Activated T-helper 1 cell treated with anti-CD3 and anti-CD28 coated beads, Interleukin-12 subunit alpha, Interleukin-12 subunit beta, Interleukin-2, Interleukin-4 antibody, amounts not matched to agents 30 ng/mL and 10 ng/mL and 1 ng/mL, durations not matched to agents 14 hours and 24 hours and 36 hours (primary cell): ENCODE measurements at regions of chr3 and their contacts with region 1.

Region 1: GRCh38 chr3:185353823-185354614 is 8.9 kb upstream of the MAP3K13 start:
- DNase-seq: peak; percentile 68
- H3K4me3 Mint-ChIP-seq: no peak overlapping the region
- H3K27ac Mint-ChIP-seq: no peak overlapping the region
- H3K4me1 Mint-ChIP-seq: no peaks in the 10 kb centered on the region
- H3K27me3 Mint-ChIP-seq: peaks cover 22% of the 10 kb centered on the region

Region 2: DNA sequence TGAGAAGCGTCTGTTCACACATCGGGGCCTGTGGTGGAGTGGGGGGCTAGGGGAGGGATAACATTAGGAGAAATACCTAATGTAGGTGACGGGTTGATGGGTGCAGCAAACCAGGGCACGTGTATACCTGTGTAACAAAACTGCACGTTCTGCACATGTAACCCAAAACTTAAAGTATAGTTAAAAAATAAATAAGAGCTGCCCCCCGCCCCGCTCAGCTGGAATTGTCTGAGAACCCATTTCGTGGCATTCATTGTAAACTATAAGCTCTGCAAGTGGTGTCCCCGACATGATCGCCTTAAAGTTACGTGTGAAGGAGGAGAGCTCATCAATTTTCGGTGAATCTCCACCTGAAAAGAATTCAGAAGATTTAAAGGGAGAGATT is 205.7 kb after region 1 on chr3:
- intact Hi-C with region 1: loop called (anchors 1 kb)
- DNase-seq: no peak
- H3K4me3 Mint-ChIP-seq: no peak overlapping the region
- H3K27ac Mint-ChIP-seq: no peak overlapping the region
- H3K4me1 Mint-ChIP-seq: peaks cover 10% of the 10 kb centered on the region
- H3K27me3 Mint-ChIP-seq: peaks cover 5% of the 10 kb centered on the region

Region 3: DNA sequence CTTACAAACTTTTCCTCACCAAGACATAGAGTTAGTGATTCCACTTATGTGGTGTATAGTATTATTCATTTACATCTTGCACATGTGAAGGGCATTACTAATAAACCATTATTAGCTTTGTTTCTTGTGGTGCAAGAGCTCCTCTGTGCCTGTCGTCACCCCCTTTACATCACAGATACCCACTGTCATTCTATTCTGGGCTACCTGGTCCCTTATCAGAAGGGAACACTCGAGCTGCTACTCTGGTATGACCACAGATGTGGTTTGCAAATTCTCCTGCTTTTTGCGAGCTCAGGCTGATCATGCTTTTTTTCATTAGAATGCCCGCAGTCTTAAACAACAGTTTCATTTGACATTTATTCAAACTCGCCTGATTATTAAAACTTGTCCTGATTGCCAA is 218.2 kb after region 1 on chr3:
- intact Hi-C with region 1: loop called (anchors 1 kb)
- DNase-seq: no peak
- H3K4me3 Mint-ChIP-seq: no peak overlapping the region
- H3K27ac Mint-ChIP-seq: no peak overlapping the region
- H3K4me1 Mint-ChIP-seq: peaks cover 6% of the 10 kb centered on the region
- H3K27me3 Mint-ChIP-seq: no peaks in the 10 kb centered on the region

Region 4: DNA sequence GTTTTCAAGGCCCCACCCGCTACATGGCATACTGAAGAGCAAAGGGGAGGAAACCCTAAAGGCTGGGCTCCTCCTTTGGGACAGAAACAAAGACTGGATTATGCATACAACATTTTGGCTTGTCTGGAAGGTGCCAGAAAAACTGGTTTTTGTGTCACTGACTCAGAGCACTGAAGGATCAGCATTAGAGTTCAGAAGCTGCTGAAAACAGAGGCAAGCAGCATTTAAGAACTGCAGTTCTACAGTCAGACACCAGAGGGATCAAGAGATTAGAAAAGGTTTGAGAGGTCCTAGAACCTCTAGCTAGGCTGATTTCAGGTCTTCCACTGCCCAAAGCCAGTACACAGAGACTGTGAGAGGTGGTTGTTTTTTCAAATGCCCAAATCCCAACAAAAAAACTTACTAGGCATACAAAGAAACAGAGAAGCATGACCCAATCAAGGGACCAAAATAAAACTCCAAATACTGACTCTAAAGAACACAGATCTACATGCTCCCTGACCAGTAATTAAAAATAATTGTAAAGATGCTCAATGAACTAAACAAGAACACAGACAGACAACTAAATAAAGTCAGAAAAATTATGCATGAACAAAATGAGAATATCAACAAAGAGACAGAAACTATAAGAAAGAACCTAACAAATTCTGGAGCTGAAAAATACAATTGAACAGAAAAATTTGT is 323.3 kb after region 1 on chr3:
- intact Hi-C with region 1: no loop called
- DNase-seq: no peak
- H3K4me3 Mint-ChIP-seq: no peak overlapping the region
- H3K27ac Mint-ChIP-seq: no peak overlapping the region
- H3K4me1 Mint-ChIP-seq: no peaks in the 10 kb centered on the region
- H3K27me3 Mint-ChIP-seq: peaks cover 28% of the 10 kb centered on the region